ENCODE measurements at regions of chr2 and their contacts with region 1.

Region 1: DNA sequence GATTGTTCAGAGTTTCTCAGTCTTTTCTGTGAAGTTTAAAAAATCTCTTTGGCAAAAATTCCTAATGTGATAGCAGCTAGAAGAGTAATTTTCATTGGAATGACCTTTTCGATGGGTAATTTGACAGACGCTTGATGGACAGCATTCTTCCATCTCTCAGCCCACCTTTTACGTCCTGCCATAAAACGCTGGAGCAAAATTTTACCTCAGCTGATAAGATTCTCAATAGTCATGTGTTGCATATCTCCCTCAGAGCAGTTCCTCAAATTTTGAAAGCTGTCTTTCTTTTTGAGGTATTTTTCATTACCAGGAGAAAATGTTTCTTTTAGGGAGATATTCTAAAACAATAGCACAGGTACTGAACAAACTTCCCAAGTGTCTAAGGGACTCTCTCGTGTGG is 441.4 kb downstream of the PARD3B start:
- DNase-seq: no peak
- H3K4me3 ChIP-seq: no peak overlapping the region
- H3K27ac ChIP-seq: no peak overlapping the region
- H3K4me1 ChIP-seq: no peaks in the 10 kb centered on the region
- H3K27me3 ChIP-seq: no peaks in the 10 kb centered on the region
- CTCF ChIP-seq: no peak
- POLR2A ChIP-seq: no peak

Region 2: GRCh38 chr2:204824778-204825453 is 161.7 kb before region 1 on chr2:
- intact Hi-C with region 1: no loop called
- DNase-seq: no peak
- H3K4me3 ChIP-seq: no peak overlapping the region
- H3K27ac ChIP-seq: no peak overlapping the region
- H3K4me1 ChIP-seq: no peaks in the 10 kb centered on the region
- H3K27me3 ChIP-seq: no peaks in the 10 kb centered on the region
- CTCF ChIP-seq: no peak
- POLR2A ChIP-seq: no peak

Region 3: DNA sequence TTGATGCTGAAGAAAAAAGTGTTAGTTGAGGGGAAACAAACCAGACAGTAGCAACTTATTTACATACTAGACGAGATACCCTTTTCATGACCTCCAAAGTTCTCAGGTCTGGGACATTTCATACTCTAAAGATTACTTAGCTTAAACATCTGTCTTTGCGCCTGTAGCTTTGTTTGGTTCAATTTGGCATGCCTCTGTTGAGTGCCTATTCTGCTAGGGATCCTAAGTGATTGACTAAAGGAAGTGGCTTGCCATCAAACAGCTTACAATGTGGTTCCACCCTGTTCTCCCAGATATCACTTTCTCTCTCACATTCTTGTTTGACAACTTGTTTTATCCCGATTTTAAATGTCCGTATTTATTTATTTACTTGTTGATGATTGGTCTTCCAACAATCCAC is 47.4 kb after region 1 on chr2:
- intact Hi-C with region 1: loop called (anchors 2 kb)
- DNase-seq: no peak
- H3K4me3 ChIP-seq: no peak overlapping the region
- H3K27ac ChIP-seq: no peak overlapping the region
- H3K4me1 ChIP-seq: no peaks in the 10 kb centered on the region
- H3K27me3 ChIP-seq: no peaks in the 10 kb centered on the region
- CTCF ChIP-seq: no peak
- POLR2A ChIP-seq: no peak